Left lung (tissue), 14 donors: ENCODE measurements at regions of chr9 and their contacts with region 1.

Region 1: DNA sequence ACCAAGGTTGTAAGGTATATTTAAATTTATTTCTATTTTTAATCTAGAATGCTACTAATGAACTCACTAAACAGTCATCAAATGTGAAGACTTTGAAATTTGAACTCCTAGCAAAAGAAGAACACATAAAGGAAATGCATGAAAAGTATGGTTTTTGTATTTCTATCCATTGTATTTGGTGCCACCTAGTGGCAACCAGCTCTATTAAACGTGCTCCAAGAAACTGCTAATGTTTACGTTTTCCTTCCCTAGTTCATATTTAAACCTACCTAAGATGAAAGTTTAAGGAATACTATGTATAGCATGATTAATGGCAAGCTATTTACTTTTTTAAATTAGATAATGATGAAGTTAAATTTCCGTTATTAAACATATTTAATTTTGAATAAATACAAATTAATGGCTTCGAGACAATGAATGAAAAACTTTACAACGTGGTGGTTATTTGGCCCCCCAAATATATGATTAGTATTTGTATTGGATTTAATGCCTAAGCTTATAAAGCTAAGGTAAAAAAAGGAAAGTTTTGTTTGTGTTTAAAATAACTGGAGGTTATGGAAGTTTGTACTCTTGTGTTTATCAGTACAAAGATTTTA is 115.9 kb upstream of the SH3GL2 start:
- DNase-seq: peak in 2 of 4 donors; percentile 67 to 83
- ATAC-seq: peak; percentile 69
- H3K4me3 ChIP-seq: no peak overlapping the region
- H3K27ac ChIP-seq: no peak overlapping the region
- H3K4me1 ChIP-seq: no peaks in the 10 kb centered on the region
- H3K27me3 ChIP-seq: no peaks in the 10 kb centered on the region
- CTCF ChIP-seq: peak; percentile 60 to 71

Region 2: DNA sequence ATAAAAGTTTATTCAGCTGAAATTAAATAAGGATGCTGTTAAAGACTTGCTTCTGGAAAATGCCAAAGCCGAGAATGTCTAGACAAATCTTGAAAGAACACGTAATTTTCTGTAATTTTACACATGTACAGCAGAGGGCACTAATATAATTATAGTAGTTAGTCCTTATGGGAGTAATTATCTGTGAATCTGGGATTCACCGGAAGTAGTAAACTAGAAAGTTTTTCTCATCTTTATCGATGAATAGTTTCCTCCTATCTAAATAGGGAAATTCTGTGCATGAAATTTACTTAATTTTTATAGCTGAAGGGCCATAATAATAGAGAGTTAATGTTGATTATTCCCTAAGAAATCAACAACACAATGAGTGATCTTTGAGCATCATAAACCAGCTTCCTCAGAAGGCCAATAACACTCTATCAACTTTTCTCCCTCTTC is 346.5 kb before region 1 on chr9:
- intact Hi-C with region 1: loop called in 1 of 2 experiments (anchors 10 kb)
- DNase-seq: peak in 2 of 4 donors; percentile 29 to 30
- ATAC-seq: peak; percentile 72
- H3K4me3 ChIP-seq: no peak overlapping the region
- H3K27ac ChIP-seq: no peak overlapping the region
- H3K4me1 ChIP-seq: no peaks in the 10 kb centered on the region
- H3K27me3 ChIP-seq: no peaks in the 10 kb centered on the region
- CTCF ChIP-seq: peak; percentile 30 to 32

Region 3: GRCh38 chr9:17130291-17130690 is 332.7 kb before region 1 on chr9:
- intact Hi-C with region 1: no loop called
- DNase-seq: no peak
- ATAC-seq: no peak
- H3K4me3 ChIP-seq: no peak overlapping the region
- H3K27ac ChIP-seq: no peak overlapping the region
- H3K4me1 ChIP-seq: peaks cover 0 to 15% of the 10 kb centered on the region in 2 donors
- H3K27me3 ChIP-seq: no peaks in the 10 kb centered on the region
- CTCF ChIP-seq: no peak

Region 4: GRCh38 chr9:17519761-17520160 is 56.8 kb after region 1 on chr9:
- intact Hi-C with region 1: no loop called
- DNase-seq: peak in 1 of 4 donors; percentile 29
- ATAC-seq: peak; percentile 70
- H3K4me3 ChIP-seq: no peak overlapping the region
- H3K27ac ChIP-seq: no peak overlapping the region
- H3K4me1 ChIP-seq: peaks cover 0 to 3% of the 10 kb centered on the region in 2 donors
- H3K27me3 ChIP-seq: no peaks in the 10 kb centered on the region
- CTCF ChIP-seq: no peak